ENCODE measurements at regions of chr16 and their contacts with region 1.

Region 1: GRCh38 chr16:56702836-56703235 is 20.6 kb downstream of the MT1X start:
- DNase-seq: no peak
- H3K4me3 ChIP-seq: no peak overlapping the region
- H3K27ac ChIP-seq: no peak overlapping the region
- H3K4me1 ChIP-seq: no peaks in the 10 kb centered on the region
- H3K27me3 ChIP-seq: no peaks in the 10 kb centered on the region
- CTCF ChIP-seq: no peak

Region 2: DNA sequence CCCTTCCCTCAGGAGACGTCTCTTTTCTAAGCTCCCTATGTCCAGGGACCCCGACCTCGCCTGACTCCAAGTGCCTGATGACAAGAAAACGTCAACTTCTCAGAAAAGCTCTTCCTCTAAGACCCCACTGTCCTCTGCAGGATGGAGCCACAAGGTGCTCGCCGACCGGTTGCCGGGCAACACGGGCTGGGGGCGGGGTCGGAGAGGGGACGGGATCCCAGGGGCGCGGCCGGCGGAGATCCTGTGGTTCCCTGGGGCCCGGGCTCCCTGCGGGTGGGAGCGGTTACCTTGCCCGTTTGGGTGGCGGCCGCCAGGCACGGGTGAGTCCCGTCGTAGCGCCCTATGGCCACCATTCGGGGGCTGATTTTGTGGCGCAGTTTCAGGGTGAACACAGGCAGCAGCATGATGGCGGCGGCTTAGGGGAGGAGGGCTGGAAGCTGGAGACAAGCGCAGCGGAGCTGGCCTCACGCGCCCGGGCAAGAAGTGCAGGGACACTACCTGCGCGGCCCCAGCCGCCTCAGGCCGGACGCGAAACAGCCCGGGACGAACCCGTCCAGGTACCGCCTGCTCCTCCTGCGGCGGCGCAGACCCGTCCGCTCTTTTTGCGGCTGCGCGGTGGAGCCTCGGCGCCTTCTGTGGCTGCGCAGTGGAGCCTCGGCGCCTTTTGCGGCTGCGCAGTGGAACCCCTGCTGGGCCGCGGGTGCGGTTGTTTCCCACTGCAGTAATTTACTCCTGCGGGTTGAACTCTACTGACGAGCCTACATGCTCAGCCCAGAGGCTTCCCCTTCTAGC is 183.2 kb before region 1 on chr16 and contains the start of gene BBS2:
- intact Hi-C with region 1: loop called (anchors 2 kb)
- DNase-seq: peak; percentile 49 to 92
- H3K4me3 ChIP-seq: peak within 1 kb of the TSS; percentile 91 to 94
- H3K27ac ChIP-seq: peak within 1 kb of the TSS; percentile 82 to 84
- H3K4me1 ChIP-seq: peaks cover 0 to 28% of the 10 kb centered on the region in 2 donors
- H3K27me3 ChIP-seq: no peaks in the 10 kb centered on the region
- CTCF ChIP-seq: no peak
- total RNA-seq, gene BBS2: 29.4 TPM

Region 3: DNA sequence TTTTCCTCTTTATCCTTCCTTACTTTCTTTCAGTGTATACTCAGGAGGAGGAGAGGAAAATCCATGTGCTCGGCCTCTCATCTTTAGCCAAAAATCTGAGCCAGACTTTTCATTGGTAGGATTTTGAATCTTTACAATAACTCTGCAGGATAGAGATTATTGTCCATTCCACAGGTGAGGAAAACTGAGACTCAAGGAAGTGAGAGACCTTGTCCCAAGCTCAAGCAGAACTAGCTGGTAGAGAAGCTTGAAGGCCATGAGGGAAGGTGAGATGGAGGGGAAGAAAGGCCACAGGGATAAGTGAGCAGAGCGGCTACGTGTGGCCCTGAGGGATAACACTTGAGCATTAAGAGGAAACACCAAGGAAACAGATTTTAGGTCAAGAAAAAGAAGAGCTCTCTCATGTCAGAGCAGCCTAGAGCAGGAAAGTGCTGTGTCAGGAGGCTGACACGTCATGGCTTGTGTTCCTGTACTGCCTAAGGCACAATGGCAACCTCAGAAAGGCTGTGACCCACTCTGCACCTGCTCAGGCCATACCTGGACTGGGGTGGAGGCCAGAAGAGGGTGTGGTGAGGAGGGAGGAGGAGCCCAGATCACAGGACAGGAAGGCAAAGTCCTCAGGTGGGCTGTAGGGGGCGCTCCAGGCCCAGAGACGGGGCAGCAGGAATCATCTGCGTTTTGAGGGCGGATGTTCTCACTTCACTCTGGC is 126.1 kb before region 1 on chr16:
- intact Hi-C with region 1: loop called (anchors 1 kb)
- DNase-seq: peak in 1 of 2 donors; percentile 82
- H3K4me3 ChIP-seq: no peak overlapping the region
- H3K27ac ChIP-seq: no peak overlapping the region
- H3K4me1 ChIP-seq: no peaks in the 10 kb centered on the region
- H3K27me3 ChIP-seq: no peaks in the 10 kb centered on the region
- CTCF ChIP-seq: peak; percentile 45 to 71 (median 67)

Region 4: GRCh38 chr16:56600398-56600999 is 102.3 kb before region 1 on chr16:
- intact Hi-C with region 1: loop called (anchors 2 kb)
- DNase-seq: no peak
- H3K4me3 ChIP-seq: no peak overlapping the region
- H3K27ac ChIP-seq: no peak overlapping the region
- H3K4me1 ChIP-seq: no peaks in the 10 kb centered on the region
- H3K27me3 ChIP-seq: no peaks in the 10 kb centered on the region
- CTCF ChIP-seq: peak; percentile 36 to 69 (median 50)

Region 5: DNA sequence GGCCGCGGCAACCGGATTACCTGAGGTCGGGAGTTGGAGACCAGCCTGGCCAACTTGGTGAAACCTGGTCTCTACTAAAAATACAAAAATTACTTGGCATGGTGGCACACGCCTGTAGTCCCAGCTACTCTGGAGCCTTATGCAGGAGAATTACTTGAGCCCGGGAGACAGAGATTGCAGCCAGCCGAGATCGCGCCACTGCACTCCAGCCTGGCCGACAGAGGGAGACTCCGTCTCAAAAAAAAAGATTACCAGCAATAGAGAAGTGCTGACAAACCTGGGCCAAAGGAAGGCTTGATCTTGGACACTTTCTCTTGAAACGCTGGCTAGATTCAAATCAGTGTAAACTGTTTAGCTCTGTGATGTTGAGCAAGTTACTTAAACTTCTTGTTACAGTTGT is 28.9 kb before region 1 on chr16:
- intact Hi-C with region 1: loop called (anchors 1 kb)
- DNase-seq: peak in 1 of 2 donors; percentile 75
- H3K4me3 ChIP-seq: no peak overlapping the region
- H3K27ac ChIP-seq: no peak overlapping the region
- H3K4me1 ChIP-seq: peaks cover 0 to 7% of the 10 kb centered on the region in 2 donors
- H3K27me3 ChIP-seq: no peaks in the 10 kb centered on the region
- CTCF ChIP-seq: peak; percentile 46 to 71 (median 62)

Region 6: GRCh38 chr16:57377080-57377841 is 674.4 kb after region 1 on chr16:
- intact Hi-C with region 1: no loop called
- DNase-seq: no peak
- H3K4me3 ChIP-seq: peak overlapping the region in 1 of 2 donors; percentile 23
- H3K27ac ChIP-seq: peak overlapping the region; percentile 72 to 94
- H3K4me1 ChIP-seq: peaks cover 10 to 43% of the 10 kb centered on the region in 2 donors
- H3K27me3 ChIP-seq: no peaks in the 10 kb centered on the region
- CTCF ChIP-seq: no peak